Activated naive CD4-positive, alpha-beta T cell treated with anti-CD3 and anti-CD28 coated beads for 36 hours (primary cell): ENCODE measurements at regions of chr5 and their contacts with region 1.

Region 1: GRCh38 chr5:12023614-12024241 is 119.5 kb upstream of the CTNND2 start:
- DNase-seq: no peak
- H3K4me3 Mint-ChIP-seq: no peak overlapping the region
- H3K27ac Mint-ChIP-seq: no peak overlapping the region
- H3K4me1 Mint-ChIP-seq: no peaks in the 10 kb centered on the region
- H3K27me3 Mint-ChIP-seq: no peaks in the 10 kb centered on the region

Region 2: GRCh38 chr5:11268891-11269290 is 754.8 kb before region 1 on chr5:
- CTCF ChIA-PET with region 1: no interaction called
- intact Hi-C with region 1: loop called (anchors 1 kb)
- DNase-seq: no peak
- H3K4me3 Mint-ChIP-seq: no peak overlapping the region
- H3K27ac Mint-ChIP-seq: no peak overlapping the region
- H3K4me1 Mint-ChIP-seq: no peaks in the 10 kb centered on the region
- H3K27me3 Mint-ChIP-seq: peaks cover 6% of the 10 kb centered on the region